ENCODE measurements at regions of chr2 and their contacts with region 1.

Region 1: GRCh38 chr2:201964631-201965206 is 68.9 kb upstream of the FZD7 start:
- DNase-seq: no peak
- H3K4me3 ChIP-seq: no peak overlapping the region
- H3K27ac ChIP-seq: peak overlapping the region in 1 of 2 donors; percentile 7
- H3K4me1 ChIP-seq: peaks cover 0 to 3% of the 10 kb centered on the region in 2 donors
- H3K27me3 ChIP-seq: no peaks in the 10 kb centered on the region
- CTCF ChIP-seq: no peak
- POLR2A ChIP-seq: no peak

Region 2: GRCh38 chr2:200585730-200586643 is 1378.7 kb before region 1 on chr2 and contains the start of gene AOX1:
- intact Hi-C with region 1: loop called (anchors 5 kb)
- DNase-seq: no peak
- H3K4me3 ChIP-seq: peak within 1 kb of the TSS; percentile 67 to 78 (median 67)
- H3K27ac ChIP-seq: peak within 1 kb of the TSS; percentile 73 to 91
- H3K4me1 ChIP-seq: no peaks in the 10 kb centered on the region
- H3K27me3 ChIP-seq: no peaks in the 10 kb centered on the region
- CTCF ChIP-seq: no peak
- POLR2A ChIP-seq: no peak
- total RNA-seq, gene AOX1: 100.0 to 611 (median 111) TPM